PC-3 (cell line): ENCODE measurements at regions of chr4 and their contacts with region 1.

Region 1: GRCh38 chr4:105895583-105896460 is 551 bp downstream of the NPNT start:
- DNase-seq: peak; percentile 35
- ATAC-seq: peak; percentile 32
- H3K4me3 ChIP-seq: peak overlapping the region; percentile 90
- H3K27ac ChIP-seq: peak overlapping the region; percentile 41
- H3K4me1 ChIP-seq: peaks cover 26% of the 10 kb centered on the region
- H3K27me3 ChIP-seq: no peaks in the 10 kb centered on the region
- CTCF ChIP-seq: 0 out of 2 replicates have a peak, but pooled peaks have one; percentile 8

Region 2: DNA sequence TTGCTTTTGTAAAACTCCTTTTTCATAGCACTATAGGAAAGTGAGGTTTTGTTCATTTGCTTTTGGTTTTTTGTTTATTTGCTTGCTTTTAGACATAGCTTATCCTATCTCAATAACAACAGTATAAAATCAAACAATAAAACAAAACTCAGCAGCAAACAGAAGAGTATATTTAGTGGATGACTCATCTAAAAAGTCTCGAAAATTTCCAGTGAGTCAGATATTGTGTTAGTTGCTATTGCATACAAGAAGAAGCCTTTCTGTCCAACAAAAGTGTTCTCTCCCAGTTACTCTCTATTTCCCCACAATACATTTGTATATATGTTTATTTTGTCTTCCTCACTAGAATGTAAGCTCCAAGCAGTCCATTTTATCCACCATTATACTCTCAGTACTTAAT is 36.6 kb before region 1 on chr4:
- CTCF ChIA-PET with region 1: no interaction called
- POLR2A ChIA-PET with region 1: no interaction called
- intact Hi-C with region 1: no loop called
- DNase-seq: peak; percentile 82
- ATAC-seq: peak; percentile 92
- H3K4me3 ChIP-seq: no peak overlapping the region
- H3K27ac ChIP-seq: peak overlapping the region; percentile 68
- H3K4me1 ChIP-seq: peaks cover 15% of the 10 kb centered on the region
- H3K27me3 ChIP-seq: no peaks in the 10 kb centered on the region
- CTCF ChIP-seq: no peak

Region 3: DNA sequence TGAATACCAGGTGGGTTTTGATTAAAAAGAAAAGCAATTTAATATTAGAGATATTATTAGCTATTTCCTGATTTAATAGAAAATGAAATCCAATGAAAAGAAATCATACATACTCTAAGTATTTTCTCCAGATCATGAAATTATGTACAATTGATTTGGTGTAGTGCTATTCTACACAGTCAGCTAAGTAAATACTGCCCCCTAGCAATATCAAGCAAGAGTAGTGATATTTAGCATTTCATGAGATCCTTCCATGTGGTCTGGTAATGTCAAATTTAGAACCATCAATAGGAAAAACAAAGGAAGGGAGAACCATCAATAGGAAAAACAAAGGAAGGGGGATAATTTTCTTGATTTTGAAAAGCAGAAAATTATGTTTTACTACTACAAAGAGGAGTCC is 305.6 kb after region 1 on chr4:
- CTCF ChIA-PET with region 1: no interaction called
- POLR2A ChIA-PET with region 1: no interaction called
- intact Hi-C with region 1: loop called (anchors 10 kb)
- DNase-seq: peak; percentile 33
- ATAC-seq: peak; percentile 59; the same call in 1 of the 2 replicates
- H3K4me3 ChIP-seq: no peak overlapping the region
- H3K27ac ChIP-seq: no peak overlapping the region
- H3K4me1 ChIP-seq: no peaks in the 10 kb centered on the region
- H3K27me3 ChIP-seq: no peaks in the 10 kb centered on the region
- CTCF ChIP-seq: peak; percentile 71